Calu3 (cell line): ENCODE measurements at regions of chr5 and their contacts with region 1.

Region 1: DNA sequence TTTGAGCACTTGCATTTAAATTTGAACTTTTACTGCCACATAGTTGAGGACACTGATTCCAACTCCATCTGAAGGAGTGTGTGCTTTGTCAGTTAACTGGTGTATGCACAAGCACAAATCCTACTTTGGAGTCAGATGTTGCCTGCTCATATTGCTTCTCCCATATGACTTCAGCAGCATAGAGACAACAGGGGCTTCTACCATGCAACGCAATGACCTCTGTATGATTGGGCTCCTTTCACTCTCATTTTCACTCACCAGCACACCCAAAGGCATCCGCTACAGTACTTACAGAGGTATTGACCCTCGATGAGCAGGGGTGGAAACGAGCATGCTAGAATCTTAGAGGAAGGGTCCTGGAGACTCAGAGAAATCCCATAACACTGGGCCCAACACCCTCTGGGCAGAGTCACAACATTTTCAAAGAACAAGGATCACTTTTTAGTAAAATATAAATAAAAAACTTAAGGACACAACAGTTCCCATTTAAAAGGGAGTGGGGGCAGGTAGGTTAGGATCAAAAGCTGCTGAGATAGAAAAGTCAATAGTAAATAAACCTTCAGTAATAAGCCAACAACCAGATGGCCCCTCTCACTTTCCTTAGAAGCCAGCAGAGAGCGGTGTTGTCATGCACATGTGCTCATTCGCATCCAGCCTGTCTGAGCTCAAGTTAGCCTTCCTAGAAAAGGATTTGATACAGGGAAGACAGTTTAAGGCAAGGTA is 203.8 kb downstream of the SNCAIP start:
- DNase-seq: peak; percentile 65
- H3K4me3 Mint-ChIP-seq: peak overlapping the region; percentile 79
- H3K27ac Mint-ChIP-seq: no peak overlapping the region
- H3K4me1 Mint-ChIP-seq: no peaks in the 10 kb centered on the region
- H3K27me3 Mint-ChIP-seq: peaks cover 29% of the 10 kb centered on the region
- CTCF ChIP-seq: peak; percentile 67

Region 2: GRCh38 chr5:122312591-122313406 is 203.1 kb before region 1 on chr5:
- CTCF ChIA-PET with region 1: no interaction called
- intact Hi-C with region 1: no loop called
- DNase-seq: peak; percentile 28
- H3K4me3 Mint-ChIP-seq: peak overlapping the region; percentile 75
- H3K27ac Mint-ChIP-seq: no peak overlapping the region
- H3K4me1 Mint-ChIP-seq: peaks cover 13% of the 10 kb centered on the region
- H3K27me3 Mint-ChIP-seq: peaks cover 79% of the 10 kb centered on the region
- CTCF ChIP-seq: no peak

Region 3: DNA sequence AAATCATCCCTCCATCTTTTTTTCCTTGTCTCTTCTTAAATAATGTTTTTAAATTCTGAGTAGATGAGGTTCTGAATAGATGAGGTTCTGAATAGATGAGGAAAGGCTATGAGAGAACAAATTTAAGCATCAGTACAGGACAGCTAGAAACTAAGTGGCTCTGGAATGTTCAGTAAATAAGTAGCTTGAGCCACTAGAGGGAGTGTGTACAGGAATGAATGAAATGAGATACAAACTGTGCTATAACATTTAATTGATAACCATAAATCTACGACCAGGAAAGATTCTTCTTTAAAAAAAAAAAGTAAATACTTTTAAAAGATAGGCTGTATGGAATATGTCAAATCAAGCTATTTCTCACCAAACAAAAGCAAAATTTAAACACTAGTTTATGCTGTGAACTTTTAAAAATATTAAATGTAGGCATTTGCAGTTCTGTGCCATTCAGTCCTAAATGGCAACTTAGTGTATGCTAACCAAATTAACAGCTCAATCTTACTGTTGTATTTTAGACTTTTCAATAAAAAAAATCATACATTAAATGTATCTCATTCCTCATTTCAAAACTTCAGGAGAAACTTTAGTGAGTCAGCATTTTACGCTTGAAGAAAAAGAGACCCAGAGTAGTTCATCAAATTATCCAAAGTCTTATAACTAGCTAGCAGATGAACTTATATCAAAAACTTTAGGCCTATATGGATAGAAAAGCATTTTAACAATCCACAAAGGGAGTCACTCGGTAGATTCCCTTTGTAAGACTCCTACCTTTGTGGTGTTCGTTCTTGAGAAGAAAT is 188.6 kb after region 1 on chr5:
- CTCF ChIA-PET with region 1: interaction called, 10 read pairs
- intact Hi-C with region 1: no loop called
- DNase-seq: no peak
- H3K4me3 Mint-ChIP-seq: no peak overlapping the region
- H3K27ac Mint-ChIP-seq: no peak overlapping the region
- H3K4me1 Mint-ChIP-seq: no peaks in the 10 kb centered on the region
- H3K27me3 Mint-ChIP-seq: no peaks in the 10 kb centered on the region
- CTCF ChIP-seq: peak; percentile 33

Region 4: GRCh38 chr5:122999945-123000563 is 484.2 kb after region 1 on chr5:
- CTCF ChIA-PET with region 1: no interaction called
- intact Hi-C with region 1: loop called (anchors 5 kb)
- DNase-seq: peak; percentile 38
- H3K4me3 Mint-ChIP-seq: no peak overlapping the region
- H3K27ac Mint-ChIP-seq: no peak overlapping the region
- H3K4me1 Mint-ChIP-seq: no peaks in the 10 kb centered on the region
- H3K27me3 Mint-ChIP-seq: no peaks in the 10 kb centered on the region
- CTCF ChIP-seq: peak; percentile 10

Region 5: GRCh38 chr5:123367739-123368138 is 851.9 kb after region 1 on chr5:
- CTCF ChIA-PET with region 1: interaction called, 7 read pairs
- intact Hi-C with region 1: loop called (anchors 1 kb)
- DNase-seq: no peak
- H3K4me3 Mint-ChIP-seq: no peak overlapping the region
- H3K27ac Mint-ChIP-seq: no peak overlapping the region
- H3K4me1 Mint-ChIP-seq: no peaks in the 10 kb centered on the region
- H3K27me3 Mint-ChIP-seq: no peaks in the 10 kb centered on the region
- CTCF ChIP-seq: peak; percentile 30

Region 6: DNA sequence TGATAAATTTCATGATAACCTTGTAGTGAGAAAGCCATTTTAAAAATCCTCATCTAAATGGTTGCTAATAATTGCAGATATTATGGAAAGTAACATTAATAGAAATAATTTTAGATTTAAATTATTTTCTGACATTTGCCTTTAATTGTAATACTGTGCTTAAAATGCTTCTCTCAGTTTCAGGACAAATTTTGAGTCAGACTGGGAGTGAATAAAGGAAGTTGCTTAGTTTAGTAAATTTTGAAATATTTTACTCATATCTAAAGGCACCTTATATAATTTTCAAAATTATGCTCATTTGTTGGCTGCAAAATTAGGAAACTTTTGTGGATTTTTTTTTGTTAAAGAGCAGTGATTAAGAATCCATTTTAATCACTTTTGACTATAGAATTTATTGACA is 1090.0 kb after region 1 on chr5:
- CTCF ChIA-PET with region 1: no interaction called
- intact Hi-C with region 1: loop called (anchors 5 kb)
- DNase-seq: no peak
- H3K4me3 Mint-ChIP-seq: no peak overlapping the region
- H3K27ac Mint-ChIP-seq: no peak overlapping the region
- H3K4me1 Mint-ChIP-seq: no peaks in the 10 kb centered on the region
- H3K27me3 Mint-ChIP-seq: no peaks in the 10 kb centered on the region
- CTCF ChIP-seq: no peak